Naive thymus-derived CD8-positive, alpha-beta T cell (primary cell): ENCODE measurements at regions of chr7 and their contacts with region 1.

Region 1: GRCh38 chr7:150448789-150449147 is 1.7 kb upstream of the GIMAP8 start:
- DNase-seq: peak; percentile 71 to 93 (median 86)
- ATAC-seq: peak; percentile 22 to 44
- H3K4me3 Mint-ChIP-seq: peak overlapping the region; percentile 95 to 100 (median 99)
- H3K27ac Mint-ChIP-seq: peak overlapping the region; percentile 91 to 99 (median 97)
- H3K4me1 Mint-ChIP-seq: peaks cover 42 to 67% (median 52%) of the 10 kb centered on the region in 4 donors
- H3K27me3 Mint-ChIP-seq: no peaks in the 10 kb centered on the region

Region 2: GRCh38 chr7:150502519-150502918 is 53.8 kb after region 1 on chr7:
- POLR2A ChIA-PET with region 1: interaction called, 153 read pairs
- DNase-seq: peak in 5 of 10 donors; percentile 13 to 81 (median 58)
- ATAC-seq: peak; percentile 84 to 98
- H3K4me3 Mint-ChIP-seq: peak overlapping the region; percentile 13 to 83 (median 70)
- H3K27ac Mint-ChIP-seq: peak overlapping the region; percentile 83 to 97 (median 92)
- H3K4me1 Mint-ChIP-seq: peaks cover 49 to 87% (median 85%) of the 10 kb centered on the region in 4 donors
- H3K27me3 Mint-ChIP-seq: no peaks in the 10 kb centered on the region

Region 3: DNA sequence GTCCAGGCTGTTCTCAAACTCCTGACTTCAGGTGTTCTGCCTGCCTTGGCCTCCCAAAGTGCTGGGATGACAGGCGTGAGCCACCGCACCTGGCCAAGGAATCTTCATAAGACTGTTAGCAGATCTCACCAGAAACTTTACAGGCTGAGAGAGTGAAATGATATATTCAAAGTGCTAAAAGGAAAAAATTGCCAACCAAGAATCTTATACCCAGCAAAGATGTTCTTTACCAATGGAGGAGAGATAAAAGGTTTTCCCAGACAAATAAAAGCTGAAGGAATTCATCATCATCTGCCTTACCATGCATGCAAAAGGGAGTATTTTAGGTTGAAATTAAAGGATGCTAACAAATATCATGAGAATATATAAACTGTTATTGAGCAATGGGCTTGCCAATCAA is 89.5 kb after region 1 on chr7:
- POLR2A ChIA-PET with region 1: interaction called, 11 read pairs
- DNase-seq: no peak
- ATAC-seq: no peak
- H3K4me3 Mint-ChIP-seq: no peak overlapping the region
- H3K27ac Mint-ChIP-seq: no peak overlapping the region
- H3K4me1 Mint-ChIP-seq: peaks cover 4 to 32% (median 15%) of the 10 kb centered on the region in 4 donors
- H3K27me3 Mint-ChIP-seq: no peaks in the 10 kb centered on the region

Region 4: DNA sequence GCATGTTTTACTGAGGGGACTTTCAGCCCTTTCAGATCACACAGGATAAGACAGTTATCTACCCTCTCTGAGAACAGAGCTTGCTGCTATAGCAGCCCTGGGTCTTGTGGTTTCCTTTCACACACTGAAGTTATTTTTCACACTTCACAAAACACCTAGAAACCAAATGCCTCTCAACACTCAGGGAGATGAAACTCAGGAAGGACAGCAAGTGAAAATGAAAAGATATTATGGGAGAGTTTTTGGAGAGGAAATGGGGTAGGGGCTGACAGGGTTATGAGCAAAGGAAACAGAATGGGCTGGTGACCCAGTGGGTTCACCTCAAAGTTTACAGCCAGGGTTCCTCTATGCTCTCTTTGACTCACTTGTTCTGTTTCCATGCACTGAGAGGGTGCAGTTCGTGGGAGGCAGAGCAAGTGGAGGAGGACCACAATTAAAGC is 219.7 kb after region 1 on chr7:
- POLR2A ChIA-PET with region 1: interaction called, 10 read pairs
- DNase-seq: peak in 9 of 10 donors; percentile 41 to 86 (median 71)
- ATAC-seq: peak; percentile 79 to 92
- H3K4me3 Mint-ChIP-seq: peak overlapping the region; percentile 60 to 85 (median 78)
- H3K27ac Mint-ChIP-seq: peak overlapping the region; percentile 94 to 100 (median 98)
- H3K4me1 Mint-ChIP-seq: peaks cover 34 to 93% (median 89%) of the 10 kb centered on the region in 4 donors
- H3K27me3 Mint-ChIP-seq: no peaks in the 10 kb centered on the region

Region 5: GRCh38 chr7:150737265-150738055 is 288.7 kb after region 1 on chr7 and contains the start of gene GIMAP5:
- POLR2A ChIA-PET with region 1: interaction called, 245 read pairs
- DNase-seq: peak in 6 of 10 donors; percentile 27 to 60 (median 40)
- ATAC-seq: peak; percentile 67 to 76
- H3K4me3 Mint-ChIP-seq: peak within 1 kb of the TSS; percentile 88 to 100 (median 98)
- H3K27ac Mint-ChIP-seq: peak within 1 kb of the TSS; percentile 93 to 100 (median 96)
- H3K4me1 Mint-ChIP-seq: peaks cover 48 to 75% (median 68%) of the 10 kb centered on the region in 4 donors
- H3K27me3 Mint-ChIP-seq: no peaks in the 10 kb centered on the region
- polyA plus RNA-seq, gene GIMAP5: 320 to 506 (median 401) TPM